GM12878 (cell line): ENCODE measurements at regions of chr1 and their contacts with region 1.

Region 1: DNA sequence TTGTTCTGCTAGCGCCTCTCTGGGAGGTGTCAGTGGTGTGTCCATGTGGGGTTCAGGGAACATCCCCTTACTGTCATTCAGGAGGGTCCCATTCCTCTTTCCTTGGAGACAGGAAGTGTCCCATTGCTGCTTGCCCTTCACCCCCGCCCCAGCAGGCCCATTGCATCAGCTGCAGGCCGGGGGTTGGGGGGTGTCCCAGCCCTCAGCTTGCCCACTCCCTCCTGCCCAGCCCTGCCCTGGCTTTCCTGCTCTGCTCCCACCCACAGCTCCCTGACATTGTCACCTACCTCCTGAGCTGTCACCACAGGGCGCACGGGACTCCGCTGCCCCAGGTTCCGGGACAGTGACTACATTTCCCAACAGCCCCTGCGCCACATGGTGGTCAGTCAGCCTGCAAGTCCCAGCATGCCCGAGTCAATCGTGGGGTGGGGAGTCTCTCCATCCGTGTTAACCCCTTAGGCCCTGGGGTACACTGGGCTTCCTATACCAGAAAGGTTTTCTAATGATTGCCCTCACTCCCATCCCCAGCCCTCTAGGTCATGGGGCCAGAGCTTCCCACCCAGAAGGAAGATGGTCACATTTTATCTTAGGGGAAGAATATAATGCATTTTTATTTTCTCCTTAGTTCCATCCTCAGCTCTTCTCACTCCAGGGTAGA is at the start of gene INPP5B:
- DNase-seq: peak; percentile 60
- ATAC-seq: peak; percentile 99
- H3K4me3 ChIP-seq: peak within 1 kb of the TSS; percentile 89
- H3K27ac ChIP-seq: peak within 1 kb of the TSS; percentile 63
- H3K4me1 ChIP-seq: peaks cover 34% of the 10 kb centered on the region
- H3K27me3 ChIP-seq: no peaks in the 10 kb centered on the region
- CTCF ChIP-seq: no peak
- EP300 ChIP-seq: no peak
- POLR2A ChIP-seq: peak; percentile 72
- RAD21 ChIP-seq: no peak
- polyA plus RNA-seq, gene INPP5B: 10.9 to 14.6 TPM

Region 2: DNA sequence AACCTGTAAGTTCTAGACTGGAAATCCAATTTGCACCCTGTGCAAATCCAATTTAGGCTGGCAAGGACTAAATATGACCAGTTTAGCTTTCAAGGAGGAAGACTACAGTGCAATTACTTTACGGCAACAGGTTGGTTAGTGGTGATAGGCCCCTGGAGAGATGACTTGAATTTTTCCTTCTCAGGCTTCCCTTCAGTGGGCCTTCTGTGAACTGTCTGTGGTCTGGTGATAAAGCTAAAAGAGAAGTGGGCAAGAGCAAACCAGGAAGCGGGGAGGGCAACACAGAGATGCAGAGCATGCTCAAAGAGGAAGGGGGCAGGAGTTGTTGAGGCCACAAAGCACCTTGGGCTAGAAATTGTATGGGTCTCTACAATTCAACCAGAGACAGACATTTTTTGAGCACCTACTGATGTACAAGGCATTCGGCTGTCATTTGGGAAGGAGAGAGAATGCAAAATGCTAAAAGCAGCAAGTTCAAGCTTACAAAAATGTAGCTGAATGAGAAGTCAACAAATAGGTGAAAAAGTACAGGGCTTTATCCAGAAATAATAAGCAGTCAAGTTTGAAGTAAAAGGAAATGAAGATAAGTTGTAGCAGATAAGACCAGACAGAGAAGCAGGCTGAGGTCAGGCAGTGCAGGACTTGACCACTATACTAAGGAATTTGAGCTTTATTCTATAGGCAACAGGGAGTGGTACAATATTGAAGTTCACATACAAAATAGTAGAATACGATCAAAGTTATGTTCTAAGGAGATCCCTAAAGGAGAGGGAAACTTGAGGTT is 23.9 kb before region 1 on chr1:
- CTCF ChIA-PET with region 1: interaction called, 15 read pairs
- POLR2A ChIA-PET with region 1: interaction called, 7 read pairs
- RAD21 ChIA-PET with region 1: interaction called, 28 read pairs
- SMC1A ChIA-PET with region 1: interaction called, 13 read pairs
- in situ Hi-C with region 1: no loop called
- intact Hi-C with region 1: no loop called
- DNase-seq: peak; percentile 89
- ATAC-seq: peak; percentile 80
- H3K4me3 ChIP-seq: peak overlapping the region; percentile 39; the same call in 1 of the 2 replicates
- H3K27ac ChIP-seq: peak overlapping the region; percentile 79
- H3K4me1 ChIP-seq: peaks cover 45% of the 10 kb centered on the region
- H3K27me3 ChIP-seq: no peaks in the 10 kb centered on the region
- CTCF ChIP-seq: 0 out of 6 replicates have a peak, but pooled peaks of 1 of the 3 experiments have one; percentile 2
- EP300 ChIP-seq: peak; percentile 38 to 53; a peak in 3 of 4 replicates
- POLR2A ChIP-seq: no peak
- RAD21 ChIP-seq: no peak

Region 3: DNA sequence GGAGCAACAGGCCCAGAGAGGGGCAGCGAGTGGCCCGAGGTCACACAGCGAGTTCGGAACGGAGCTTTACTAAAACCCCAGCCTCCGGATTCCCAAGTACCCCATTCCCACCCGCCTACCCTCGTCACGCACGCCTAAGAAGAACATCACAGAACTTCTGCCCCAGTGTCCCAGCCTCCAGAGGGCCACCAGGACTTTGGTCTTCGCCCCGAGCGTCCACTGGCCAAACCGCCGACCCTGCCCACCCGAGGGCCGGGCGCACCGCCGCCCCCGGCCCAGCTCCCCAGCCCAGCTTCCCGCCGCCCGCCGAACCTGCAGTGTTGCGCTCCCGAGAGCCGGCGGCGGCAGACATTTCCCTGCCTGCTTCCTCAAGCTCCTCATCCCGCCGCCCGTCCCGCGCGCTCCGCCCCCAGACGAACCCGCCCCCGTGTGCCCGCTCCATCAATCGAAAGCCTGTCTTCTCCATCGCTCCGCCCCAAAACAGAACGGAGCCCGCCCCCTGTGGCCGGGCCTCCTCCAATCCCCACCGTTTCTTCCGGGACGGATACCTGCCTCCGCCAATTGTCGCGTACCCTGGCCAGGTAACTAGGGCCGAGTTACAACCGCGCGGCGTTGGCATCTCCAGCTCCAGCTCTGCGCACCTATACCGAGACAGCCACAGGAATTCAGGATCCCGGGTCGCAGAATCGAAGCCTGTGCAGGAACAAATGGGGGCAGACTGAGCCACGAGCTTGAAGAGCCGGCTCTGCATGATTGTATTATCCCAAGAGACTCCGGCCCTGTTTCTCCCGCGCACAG is 15.3 kb before region 1 on chr1:
- CTCF ChIA-PET with region 1: interaction called, 11 read pairs
- POLR2A ChIA-PET with region 1: interaction called, 17 read pairs
- RAD21 ChIA-PET with region 1: interaction called, 28 read pairs
- SMC1A ChIA-PET with region 1: interaction called, 17 read pairs
- in situ Hi-C with region 1: no loop called
- intact Hi-C with region 1: no loop called
- DNase-seq: peak; percentile 86
- ATAC-seq: peak; percentile 97
- H3K4me3 ChIP-seq: peak overlapping the region; percentile 97
- H3K27ac ChIP-seq: peak overlapping the region; percentile 67
- H3K4me1 ChIP-seq: peaks cover 9% of the 10 kb centered on the region
- H3K27me3 ChIP-seq: no peaks in the 10 kb centered on the region
- CTCF ChIP-seq: no peak
- EP300 ChIP-seq: no peak
- POLR2A ChIP-seq: peak; percentile 79
- RAD21 ChIP-seq: no peak

Region 4: DNA sequence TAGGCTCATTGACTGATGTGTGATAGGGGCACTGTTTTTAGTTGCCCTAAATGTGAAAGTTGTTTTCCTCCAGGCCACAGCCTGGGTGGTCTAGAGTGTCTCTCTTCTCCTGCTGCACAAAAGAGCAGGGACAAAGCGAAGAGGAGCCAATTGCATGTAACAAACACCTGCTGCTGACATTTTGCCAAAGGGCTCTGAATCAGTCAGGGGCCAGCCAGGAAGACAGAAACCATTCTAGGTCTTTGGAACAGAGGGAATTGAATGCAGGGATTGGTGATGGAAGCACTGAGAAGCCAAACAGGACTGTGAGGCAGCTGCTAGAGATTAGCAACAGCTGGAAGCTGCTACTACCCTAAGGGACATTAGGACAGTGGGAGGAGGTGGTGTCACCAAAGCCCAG is 285.1 kb after region 1 on chr1:
- CTCF ChIA-PET with region 1: no interaction called
- POLR2A ChIA-PET with region 1: no interaction called
- RAD21 ChIA-PET with region 1: no interaction called
- SMC1A ChIA-PET with region 1: no interaction called
- in situ Hi-C with region 1: no loop called
- intact Hi-C with region 1: no loop called
- DNase-seq: no peak
- ATAC-seq: no peak
- H3K4me3 ChIP-seq: no peak overlapping the region
- H3K27ac ChIP-seq: no peak overlapping the region
- H3K4me1 ChIP-seq: no peaks in the 10 kb centered on the region
- H3K27me3 ChIP-seq: no peaks in the 10 kb centered on the region; a peak in 1 of 4 replicates
- CTCF ChIP-seq: no peak
- EP300 ChIP-seq: no peak
- POLR2A ChIP-seq: no peak
- RAD21 ChIP-seq: no peak